Calu3 (cell line): ENCODE measurements at regions of chr18 and their contacts with region 1.

Region 1: GRCh38 chr18:21489119-21489750 is 111.3 kb downstream of the ESCO1 start:
- DNase-seq: peak; percentile 60
- H3K4me3 Mint-ChIP-seq: no peak overlapping the region
- H3K27ac Mint-ChIP-seq: no peak overlapping the region
- H3K4me1 Mint-ChIP-seq: peaks cover 8% of the 10 kb centered on the region
- H3K27me3 Mint-ChIP-seq: no peaks in the 10 kb centered on the region
- CTCF ChIP-seq: peak; percentile 75

Region 2: DNA sequence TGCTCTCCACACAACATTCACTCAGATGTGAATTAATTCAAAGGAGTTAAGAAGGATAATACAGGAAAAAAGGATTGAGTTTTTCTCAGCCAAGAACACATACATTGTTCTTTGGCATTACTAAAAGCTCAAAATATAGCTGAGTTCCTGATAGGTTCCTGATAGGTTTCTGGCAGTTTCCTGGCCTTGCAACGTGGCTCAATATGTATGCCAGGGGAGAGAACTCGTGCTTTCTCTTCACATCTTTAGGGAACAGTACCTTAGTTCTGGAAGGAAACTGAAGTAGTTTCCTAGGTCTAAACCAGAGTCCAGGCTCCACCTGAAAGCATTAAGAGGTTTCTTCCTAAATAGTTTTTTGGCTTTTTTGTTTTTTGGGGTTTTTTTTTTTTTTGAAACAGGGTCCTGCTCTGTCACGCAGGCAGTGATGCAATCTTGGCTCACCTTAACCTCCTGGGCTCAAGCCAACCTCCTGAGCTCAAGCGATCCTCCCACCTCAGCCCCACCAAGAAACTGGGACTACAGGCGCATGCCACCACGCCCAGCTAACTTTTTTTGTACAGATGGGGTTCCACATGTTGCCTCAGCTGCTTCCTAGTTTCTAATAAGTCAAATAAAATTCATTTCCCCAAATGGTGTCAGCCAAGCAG is 68.5 kb after region 1 on chr18:
- CTCF ChIA-PET with region 1: no interaction called
- intact Hi-C with region 1: loop called (anchors 10 kb)
- DNase-seq: no peak
- H3K4me3 Mint-ChIP-seq: no peak overlapping the region
- H3K27ac Mint-ChIP-seq: no peak overlapping the region
- H3K4me1 Mint-ChIP-seq: no peaks in the 10 kb centered on the region
- H3K27me3 Mint-ChIP-seq: no peaks in the 10 kb centered on the region
- CTCF ChIP-seq: no peak

Region 3: GRCh38 chr18:21704603-21705364 is 215.5 kb after region 1 on chr18 and contains the start of gene ABHD3:
- CTCF ChIA-PET with region 1: no interaction called
- intact Hi-C with region 1: no loop called
- DNase-seq: peak; percentile 93
- H3K4me3 Mint-ChIP-seq: peak within 1 kb of the TSS; percentile 88
- H3K27ac Mint-ChIP-seq: peak within 1 kb of the TSS; percentile 63
- H3K4me1 Mint-ChIP-seq: peaks cover 7% of the 10 kb centered on the region
- H3K27me3 Mint-ChIP-seq: no peaks in the 10 kb centered on the region
- CTCF ChIP-seq: peak; percentile 14
- total RNA-seq, gene ABHD3: 43.5 and 45.3 TPM in 2 replicates

Region 4: DNA sequence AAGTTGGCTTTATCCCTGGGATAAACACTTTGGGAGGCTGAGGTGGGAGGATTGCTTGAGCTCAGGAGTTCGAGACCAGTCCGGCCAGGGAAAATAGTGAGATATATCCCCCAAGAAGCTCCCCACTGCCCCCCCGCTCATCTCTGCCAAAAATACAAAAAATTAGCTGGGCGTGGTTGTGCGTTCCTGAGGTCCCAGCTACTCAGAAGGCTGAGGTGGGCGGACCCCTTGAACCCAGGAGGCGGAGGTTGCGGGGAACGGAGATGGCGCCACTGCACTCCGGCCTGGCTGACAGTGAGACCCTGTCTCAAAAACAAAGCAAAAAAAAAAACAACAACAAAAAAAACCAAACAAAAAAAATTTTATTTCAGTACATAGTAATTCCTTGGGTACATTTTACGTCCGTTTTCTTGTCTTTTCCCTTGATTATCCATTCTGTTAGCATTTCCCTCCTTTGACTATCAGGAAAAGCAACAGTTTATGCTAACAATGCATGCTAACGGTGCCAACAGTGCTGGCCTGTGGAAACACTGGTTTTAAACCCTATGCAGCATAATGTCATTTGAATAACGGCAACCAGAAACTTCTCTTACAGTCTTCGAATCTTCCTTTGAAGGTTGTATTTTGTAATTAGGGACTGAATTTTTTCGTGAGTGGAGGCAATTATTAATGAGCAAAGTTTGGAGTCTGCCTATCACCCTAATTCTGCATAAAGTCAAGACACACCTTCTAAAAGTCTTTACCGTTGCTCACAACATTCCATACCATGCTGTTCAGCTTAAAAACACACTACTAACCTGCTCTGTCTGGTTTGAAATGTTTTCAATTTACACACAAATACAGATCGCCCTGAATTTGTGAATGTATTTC is 250.6 kb after region 1 on chr18:
- CTCF ChIA-PET with region 1: no interaction called
- intact Hi-C with region 1: no loop called
- DNase-seq: no peak
- H3K4me3 Mint-ChIP-seq: peak overlapping the region; percentile 87
- H3K27ac Mint-ChIP-seq: peak overlapping the region; percentile 92
- H3K4me1 Mint-ChIP-seq: no peaks in the 10 kb centered on the region
- H3K27me3 Mint-ChIP-seq: no peaks in the 10 kb centered on the region
- CTCF ChIP-seq: no peak